GM10248 (cell line): ENCODE measurements at regions of chr7 and their contacts with region 1.

Region 1: DNA sequence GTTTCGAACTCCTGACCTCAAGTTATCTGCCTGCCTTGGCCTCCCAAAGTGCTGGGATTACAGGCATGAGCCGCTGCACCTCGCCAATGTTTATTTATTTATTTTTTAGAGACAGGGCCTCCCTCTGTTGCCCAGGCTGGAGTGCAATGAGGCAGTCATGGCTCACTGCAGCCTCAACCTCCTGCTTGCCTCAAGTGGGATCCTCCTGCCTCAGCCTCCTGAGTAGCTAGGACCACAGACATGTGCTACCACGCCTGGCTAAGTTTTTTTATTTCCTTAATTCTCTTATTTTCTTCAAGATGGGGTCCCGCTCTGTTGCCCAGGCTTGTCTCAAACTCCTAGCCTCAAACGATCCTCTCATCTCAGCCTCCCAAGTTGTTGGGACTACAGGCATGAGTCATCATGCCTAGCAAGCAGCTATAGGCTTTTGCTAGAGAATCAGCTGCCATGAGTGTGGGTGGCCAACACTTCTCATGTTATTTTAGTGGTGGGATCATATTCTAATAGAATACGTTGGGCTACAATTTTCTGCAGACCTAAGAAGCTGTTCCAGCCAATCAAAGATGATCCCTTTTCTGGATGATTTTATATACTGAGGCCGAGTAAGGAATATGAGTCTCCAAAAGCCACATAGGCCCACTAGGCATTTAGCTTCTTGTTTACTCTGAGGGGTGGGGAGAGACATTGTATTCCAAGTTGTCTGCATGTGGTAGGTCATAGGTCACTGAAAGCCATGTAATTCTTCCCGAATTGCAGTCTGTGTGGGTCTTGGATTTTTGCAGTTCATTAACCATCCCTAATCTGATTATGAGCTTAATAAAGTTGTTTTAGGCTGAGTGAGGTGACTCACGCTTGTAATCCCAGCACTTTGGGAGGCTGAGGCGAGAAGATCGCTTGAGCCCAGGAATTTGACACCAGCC is 7.6 kb upstream of the TMEM248 start:
- DNase-seq: no peak
- CTCF ChIP-seq: no peak

Region 2: GRCh38 chr7:66894463-66895080 is 18.8 kb before region 1 on chr7:
- CTCF ChIA-PET with region 1: interaction called, 11 read pairs
- POLR2A ChIA-PET with region 1: no interaction called
- DNase-seq: no peak
- CTCF ChIP-seq: peak; percentile 34

Region 3: GRCh38 chr7:66964411-66964810 is 51.0 kb after region 1 on chr7:
- CTCF ChIA-PET with region 1: no interaction called
- POLR2A ChIA-PET with region 1: no interaction called
- DNase-seq: no peak
- CTCF ChIP-seq: no peak